Cardiac septum (tissue), 1 donor: ENCODE measurements at regions of chr4 and their contacts with region 1.

Region 1: DNA sequence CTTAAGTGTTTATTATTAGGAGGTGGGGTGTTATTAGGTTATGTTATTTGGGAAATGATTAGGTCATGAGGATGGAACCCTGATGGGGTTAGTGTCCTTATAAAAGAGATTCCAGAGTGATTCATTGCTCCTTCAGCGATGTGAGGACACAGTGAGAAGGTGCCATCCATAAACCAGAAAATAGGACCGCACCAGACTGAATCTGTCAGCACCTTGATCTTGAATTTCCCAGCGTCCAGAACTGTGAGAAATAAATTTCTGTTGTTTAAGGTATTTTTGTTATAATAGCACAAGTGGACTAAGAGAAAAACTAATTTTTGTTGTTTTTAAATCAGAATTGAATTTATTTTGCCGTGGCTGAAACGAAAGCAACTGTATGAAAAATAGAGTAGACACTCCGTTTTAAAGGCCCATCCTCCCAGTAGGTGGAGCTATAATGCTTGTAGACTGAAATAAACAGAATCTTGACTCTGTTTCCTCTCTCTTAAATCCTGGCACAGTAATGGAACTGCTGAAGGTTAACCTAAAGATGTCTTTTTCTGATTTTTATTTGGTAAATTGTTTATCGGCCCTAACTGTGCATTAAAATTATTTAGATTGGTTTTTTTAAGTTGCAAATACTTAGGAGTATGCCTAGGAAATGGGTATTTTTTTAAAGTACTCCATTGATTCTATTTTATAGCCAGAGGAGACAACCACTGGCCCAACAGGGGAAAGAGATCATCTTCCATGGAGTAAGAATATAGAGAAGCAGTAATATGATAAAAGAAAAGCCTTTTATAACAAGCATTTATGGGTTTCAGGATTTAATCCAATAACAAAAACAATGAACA is 133.2 kb upstream of the ADAMTS3 start:
- DNase-seq: no peak

Region 2: DNA sequence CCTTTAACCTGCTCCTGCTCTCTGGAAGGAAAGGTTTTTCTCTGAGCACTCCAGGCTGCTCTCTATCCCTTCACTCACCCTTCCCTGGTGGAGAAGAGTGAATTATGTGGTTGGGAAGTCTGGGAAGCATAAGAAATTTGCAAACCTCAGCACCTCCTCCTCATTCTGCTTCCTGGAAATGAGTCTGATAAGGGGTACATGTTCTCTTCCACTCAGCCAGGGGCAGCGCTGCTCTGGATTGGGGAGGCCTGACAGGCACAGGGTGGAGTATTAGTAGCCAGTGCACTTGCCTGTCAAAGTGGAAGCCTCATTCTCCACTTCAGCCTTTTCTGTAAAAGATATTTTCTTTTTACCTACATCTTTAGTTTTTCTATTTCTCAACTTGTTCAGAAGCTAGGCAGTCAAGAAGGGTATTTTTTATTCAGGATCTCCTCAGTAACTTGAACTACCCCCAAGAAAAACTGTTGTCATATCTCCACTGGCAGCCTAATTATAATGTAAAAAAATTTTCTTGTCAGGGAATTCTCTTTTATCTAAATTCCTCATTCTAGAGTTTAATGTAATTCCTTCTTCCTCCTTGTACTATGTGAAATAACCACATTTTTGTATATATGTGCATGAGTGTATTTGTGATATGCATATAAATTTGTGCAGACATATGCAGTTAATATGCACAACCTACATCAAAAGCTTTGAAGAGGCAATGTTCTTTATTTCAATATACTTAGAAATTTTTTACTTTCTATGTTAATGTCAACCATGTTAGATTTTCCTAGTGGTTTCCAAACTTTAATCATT is 148.5 kb before region 1 on chr4:
- intact Hi-C with region 1: no loop called
- DNase-seq: no peak

Region 3: DNA sequence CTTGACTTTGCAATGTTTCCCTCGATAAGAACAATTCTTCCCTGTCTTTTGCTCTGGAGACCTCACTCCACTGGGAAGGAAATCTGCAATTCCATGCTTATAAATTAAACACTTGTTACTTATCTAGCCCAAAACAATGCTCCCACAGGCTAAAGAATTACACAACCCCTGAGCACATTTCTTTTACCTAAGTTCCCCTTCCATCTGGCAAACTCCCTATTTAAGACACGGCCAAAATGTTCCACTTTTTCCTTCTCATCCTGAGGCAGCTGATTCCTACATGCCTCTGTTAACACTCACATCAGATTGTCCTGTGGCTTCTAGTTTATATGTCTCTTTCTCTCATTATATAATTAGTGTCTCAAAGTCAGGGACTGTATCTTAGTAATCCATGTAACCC is 155.6 kb after region 1 on chr4:
- intact Hi-C with region 1: no loop called
- DNase-seq: no peak

Region 4: DNA sequence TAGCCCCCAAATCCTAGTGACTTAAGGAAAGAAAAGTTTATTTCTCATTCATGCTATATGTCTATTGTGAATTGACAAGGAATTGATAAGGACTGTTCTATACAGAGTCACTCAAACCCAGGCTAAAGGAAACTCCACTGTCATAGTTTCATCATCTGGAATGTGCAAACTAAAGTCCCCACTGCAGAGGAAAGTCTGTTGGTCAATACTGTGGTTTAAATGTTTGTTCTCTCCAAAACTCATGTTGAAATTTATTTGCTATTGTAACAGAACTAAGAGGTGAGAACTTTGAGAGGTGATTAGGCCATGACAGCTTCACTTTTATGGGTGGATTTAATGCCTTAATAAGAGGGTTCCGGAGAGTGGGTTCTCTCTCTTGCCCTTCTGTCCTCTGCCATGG is 217.7 kb after region 1 on chr4:
- intact Hi-C with region 1: loop called (anchors 10 kb)
- DNase-seq: no peak

Region 5: DNA sequence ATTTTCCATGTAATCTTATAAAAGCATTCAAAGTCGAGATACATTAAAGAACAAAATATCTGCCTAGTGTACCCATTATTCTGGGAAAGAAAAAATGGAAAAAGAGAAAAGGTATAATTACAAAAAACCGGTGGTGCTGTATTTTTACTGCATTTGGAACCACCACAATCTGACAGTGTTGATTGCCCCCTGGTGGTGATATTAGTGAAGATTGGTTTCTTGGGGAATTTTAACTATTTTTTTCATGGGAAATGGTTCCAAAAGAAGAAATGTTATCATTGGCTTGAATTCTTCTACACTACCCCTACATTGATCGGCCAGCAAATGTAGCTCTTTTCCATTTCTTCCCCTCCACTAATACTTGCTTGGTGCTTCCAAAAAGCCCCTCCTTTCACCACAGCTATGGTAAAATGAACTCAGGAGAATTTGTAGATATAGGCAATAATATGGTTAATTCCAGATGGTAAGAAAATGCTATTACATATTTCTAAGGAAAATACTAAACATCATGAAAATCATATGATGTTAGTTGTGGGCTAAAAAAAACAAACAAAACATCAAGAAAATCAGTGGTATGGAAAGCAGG is 317.4 kb after region 1 on chr4:
- intact Hi-C with region 1: loop called (anchors 5 kb)
- DNase-seq: no peak